Heart right ventricle (tissue), 16 donors: ENCODE measurements at regions of chr1 and their contacts with region 1.

Region 1: GRCh38 chr1:247165674-247166073 is 6.1 kb downstream of the ZNF124 start:
- DNase-seq: no peak
- ATAC-seq: no peak
- H3K4me3 ChIP-seq: no peak overlapping the region
- H3K27ac ChIP-seq: no peak overlapping the region
- H3K4me1 ChIP-seq: peaks cover 0 to 3% (median 0%) of the 10 kb centered on the region in 9 donors
- H3K27me3 ChIP-seq: no peaks in the 10 kb centered on the region
- CTCF ChIP-seq: no peak

Region 2: DNA sequence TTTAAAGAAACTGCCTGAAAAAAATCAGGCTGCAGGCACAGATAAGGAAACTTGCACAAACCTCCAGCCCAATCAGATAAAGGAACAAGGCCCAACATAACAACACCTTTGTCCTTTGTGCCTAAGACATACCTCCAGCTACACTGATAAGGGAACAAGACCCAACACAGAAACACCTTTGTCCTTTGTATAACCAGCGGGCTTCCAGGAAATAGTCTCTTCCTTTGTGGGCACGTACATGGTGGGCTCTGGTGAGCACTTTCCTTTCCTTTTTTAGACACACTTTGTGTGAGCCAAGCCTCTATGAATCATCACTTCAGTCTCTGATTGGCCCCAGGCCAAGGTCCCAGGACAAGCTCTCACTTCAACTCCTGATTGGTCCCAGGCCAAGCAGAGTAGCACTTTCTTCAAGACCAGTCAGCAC is 110.7 kb before region 1 on chr1:
- intact Hi-C with region 1: no loop called
- DNase-seq: no peak
- ATAC-seq: peak in 2 of 8 donors; percentile 30 to 41
- H3K4me3 ChIP-seq: no peak overlapping the region
- H3K27ac ChIP-seq: no peak overlapping the region
- H3K4me1 ChIP-seq: peaks cover 0 to 12% (median 0%) of the 10 kb centered on the region in 9 donors
- H3K27me3 ChIP-seq: no peaks in the 10 kb centered on the region
- CTCF ChIP-seq: no peak

Region 3: GRCh38 chr1:247119600-247120407 is 45.9 kb before region 1 on chr1:
- intact Hi-C with region 1: loop called in 7 of 10 experiments (anchors 5 kb)
- DNase-seq: no peak
- ATAC-seq: peak in 1 of 8 donors; percentile 59
- H3K4me3 ChIP-seq: no peak overlapping the region
- H3K27ac ChIP-seq: no peak overlapping the region
- H3K4me1 ChIP-seq: no peaks in the 10 kb centered on the region
- H3K27me3 ChIP-seq: no peaks in the 10 kb centered on the region
- CTCF ChIP-seq: no peak

Region 4: DNA sequence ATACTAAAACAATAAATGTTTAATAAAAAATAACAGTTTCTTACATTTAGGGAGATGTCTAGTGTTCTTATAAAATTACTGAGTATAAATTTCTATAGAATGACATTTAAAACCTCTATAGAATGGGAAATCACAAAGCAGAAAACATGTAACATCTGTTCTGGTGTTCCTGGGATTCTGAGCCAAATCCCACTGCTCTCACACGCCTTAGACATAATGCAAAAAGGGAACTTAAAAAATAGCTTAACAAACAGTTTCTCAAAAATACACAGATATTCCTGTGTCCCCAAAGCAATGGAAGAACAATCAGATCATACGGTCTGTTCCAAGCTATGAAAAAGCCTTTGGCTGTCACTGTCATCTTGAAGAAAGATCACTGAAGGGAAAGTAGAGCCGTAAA is 33.1 kb after region 1 on chr1:
- intact Hi-C with region 1: no loop called
- DNase-seq: no peak
- ATAC-seq: no peak
- H3K4me3 ChIP-seq: no peak overlapping the region
- H3K27ac ChIP-seq: no peak overlapping the region
- H3K4me1 ChIP-seq: peaks cover 0 to 2% (median 0%) of the 10 kb centered on the region in 9 donors
- H3K27me3 ChIP-seq: no peaks in the 10 kb centered on the region
- CTCF ChIP-seq: no peak

Region 5: GRCh38 chr1:247588060-247588459 is 422.4 kb after region 1 on chr1 and contains the start of gene OR2G2:
- intact Hi-C with region 1: no loop called
- DNase-seq: no peak
- ATAC-seq: no peak
- H3K4me3 ChIP-seq: no peak within 1 kb of the TSS
- H3K27ac ChIP-seq: no peak within 1 kb of the TSS
- H3K4me1 ChIP-seq: no peaks in the 10 kb centered on the region
- H3K27me3 ChIP-seq: no peaks in the 10 kb centered on the region
- CTCF ChIP-seq: no peak
- total RNA-seq, gene OR2G2: not detected